PC-3 (cell line): ENCODE measurements at regions of chr19 and their contacts with region 1.

Region 1: GRCh38 chr19:14325863-14326262 is 55.4 kb upstream of the ADGRE5 start:
- DNase-seq: no peak
- ATAC-seq: no peak
- H3K4me3 ChIP-seq: no peak overlapping the region
- H3K27ac ChIP-seq: no peak overlapping the region
- H3K4me1 ChIP-seq: no peaks in the 10 kb centered on the region
- H3K27me3 ChIP-seq: no peaks in the 10 kb centered on the region
- CTCF ChIP-seq: no peak

Region 2: DNA sequence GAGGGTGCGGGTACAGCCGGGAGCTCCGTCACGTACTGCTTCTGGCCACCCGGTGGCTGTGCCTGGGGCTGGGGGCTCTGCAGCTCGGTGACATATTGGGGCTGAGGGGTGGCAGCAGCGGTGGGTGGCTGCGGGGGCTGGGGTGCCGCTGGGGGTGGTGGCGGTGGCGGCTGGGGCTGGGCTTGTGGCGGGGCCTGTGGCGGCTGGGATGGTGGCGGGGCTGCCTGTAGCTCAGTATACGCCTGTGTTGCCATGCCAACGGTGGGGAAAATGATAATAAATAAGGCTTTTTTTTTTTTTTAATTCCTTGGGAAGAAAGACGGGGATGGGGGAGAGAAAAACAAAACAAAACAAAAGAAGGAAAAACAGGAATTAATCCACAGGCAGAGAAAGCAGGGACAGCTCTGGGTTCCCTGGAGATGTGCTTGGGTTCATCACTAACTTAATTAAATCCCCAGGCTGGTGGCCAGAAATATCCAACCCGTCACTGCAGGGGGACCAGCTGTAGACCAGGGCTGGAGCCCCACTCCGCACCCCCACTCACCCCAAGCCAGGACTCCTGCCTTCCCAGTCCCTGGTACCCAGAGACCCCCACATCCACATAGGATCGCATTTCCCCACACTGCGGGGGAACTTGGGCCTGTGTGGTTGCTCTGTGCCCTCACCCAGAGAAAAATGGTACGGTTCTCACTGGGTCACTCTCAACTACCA is 332.1 kb before region 1 on chr19:
- CTCF ChIA-PET with region 1: interaction called, 15 read pairs
- POLR2A ChIA-PET with region 1: no interaction called
- intact Hi-C with region 1: no loop called
- DNase-seq: no peak
- ATAC-seq: no peak
- H3K4me3 ChIP-seq: no peak overlapping the region
- H3K27ac ChIP-seq: no peak overlapping the region
- H3K4me1 ChIP-seq: no peaks in the 10 kb centered on the region
- H3K27me3 ChIP-seq: no peaks in the 10 kb centered on the region
- CTCF ChIP-seq: no peak

Region 3: GRCh38 chr19:14265290-14266036 is 60.4 kb before region 1 on chr19:
- CTCF ChIA-PET with region 1: no interaction called
- POLR2A ChIA-PET with region 1: no interaction called
- intact Hi-C with region 1: no loop called
- DNase-seq: no peak
- ATAC-seq: no peak
- H3K4me3 ChIP-seq: no peak overlapping the region
- H3K27ac ChIP-seq: no peak overlapping the region
- H3K4me1 ChIP-seq: no peaks in the 10 kb centered on the region
- H3K27me3 ChIP-seq: 0 out of 2 replicates have a peak, but pooled peaks cover 12% of the 10 kb centered on the region
- CTCF ChIP-seq: no peak

Region 4: GRCh38 chr19:14363183-14364097 is 37.6 kb after region 1 on chr19:
- CTCF ChIA-PET with region 1: no interaction called
- POLR2A ChIA-PET with region 1: no interaction called
- intact Hi-C with region 1: no loop called
- DNase-seq: peak; percentile 69
- ATAC-seq: peak; percentile 79
- H3K4me3 ChIP-seq: peak overlapping the region; percentile 51; the same call in 1 of the 2 replicates
- H3K27ac ChIP-seq: peak overlapping the region; percentile 15; the same call in 1 of the 2 replicates
- H3K4me1 ChIP-seq: peaks cover 8% of the 10 kb centered on the region
- H3K27me3 ChIP-seq: no peaks in the 10 kb centered on the region
- CTCF ChIP-seq: no peak